ENCODE measurements at regions of chr7 and their contacts with region 1.

Region 1: DNA sequence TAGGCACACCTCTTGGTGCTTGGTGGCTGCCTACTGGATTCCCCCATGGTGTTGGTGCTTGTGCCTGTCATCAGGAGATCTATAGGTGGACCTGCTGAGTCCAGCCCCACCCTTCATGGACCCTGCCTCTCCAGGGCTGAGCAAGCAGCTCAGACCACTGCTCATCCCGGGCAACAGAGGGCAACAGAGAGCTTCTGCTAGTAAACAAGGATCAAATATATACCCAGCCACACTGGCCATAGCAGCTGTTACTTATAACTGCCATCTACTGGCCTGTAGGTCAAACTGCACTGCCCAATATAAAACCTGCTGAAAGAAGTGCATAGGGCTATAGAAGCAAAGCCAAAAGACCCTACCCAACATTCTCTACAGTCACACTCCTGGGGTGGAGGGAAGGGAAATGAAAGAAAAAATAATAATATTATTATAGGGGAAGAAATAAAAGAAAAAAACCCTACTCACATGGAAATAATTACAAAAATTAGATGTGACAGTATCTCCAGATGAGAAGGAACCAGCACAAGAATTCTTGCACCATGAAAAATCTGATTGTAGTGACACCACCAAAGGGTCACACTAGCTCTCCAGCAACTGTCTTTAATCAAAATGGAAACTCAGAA is 54.9 kb upstream of the ZNF800 start:
- DNase-seq: peak; percentile 13 to 76 (median 59)
- H3K4me3 ChIP-seq: no peak overlapping the region
- H3K4me3 Mint-ChIP-seq: no peak overlapping the region
- H3K27ac ChIP-seq: no peak overlapping the region
- H3K27ac Mint-ChIP-seq: peak overlapping the region in 3 of 8 donors; percentile 8 to 44 (median 36)
- H3K4me1 ChIP-seq: peaks cover 8% of the 10 kb centered on the region
- H3K4me1 Mint-ChIP-seq: peaks cover 10 to 22% (median 20%) of the 10 kb centered on the region in 3 donors
- H3K27me3 ChIP-seq: no peaks in the 10 kb centered on the region
- H3K27me3 Mint-ChIP-seq: peaks cover 18 to 46% of the 10 kb centered on the region in 2 donors

Region 2: GRCh38 chr7:127119517-127119916 is 327.9 kb before region 1 on chr7:
- CTCF ChIA-PET with region 1: no interaction called
- POLR2A ChIA-PET with region 1: no interaction called
- DNase-seq: no peak
- H3K4me3 ChIP-seq: no peak overlapping the region
- H3K4me3 Mint-ChIP-seq: no peak overlapping the region
- H3K27ac ChIP-seq: no peak overlapping the region
- H3K27ac Mint-ChIP-seq: no peak overlapping the region
- H3K4me1 ChIP-seq: no peaks in the 10 kb centered on the region
- H3K4me1 Mint-ChIP-seq: no peaks in the 10 kb centered on the region
- H3K27me3 ChIP-seq: no peaks in the 10 kb centered on the region
- H3K27me3 Mint-ChIP-seq: peaks cover 3 to 6% of the 10 kb centered on the region in 2 donors

Region 3: GRCh38 chr7:127347567-127348246 is 99.7 kb before region 1 on chr7:
- CTCF ChIA-PET with region 1: interaction called, 44 read pairs
- POLR2A ChIA-PET with region 1: interaction called, 5 read pairs
- DNase-seq: peak; percentile 59 to 74 (median 66)
- H3K4me3 ChIP-seq: no peak overlapping the region
- H3K4me3 Mint-ChIP-seq: peak overlapping the region; percentile 29 to 85 (median 64)
- H3K27ac ChIP-seq: no peak overlapping the region
- H3K27ac Mint-ChIP-seq: peak overlapping the region in 4 of 8 donors; percentile 8 to 72 (median 30)
- H3K4me1 ChIP-seq: no peaks in the 10 kb centered on the region
- H3K4me1 Mint-ChIP-seq: peaks cover 12 to 26% (median 24%) of the 10 kb centered on the region in 3 donors
- H3K27me3 ChIP-seq: no peaks in the 10 kb centered on the region
- H3K27me3 Mint-ChIP-seq: peaks cover 0 to 3% of the 10 kb centered on the region in 2 donors

Region 4: GRCh38 chr7:127353897-127354296 is 93.5 kb before region 1 on chr7:
- CTCF ChIA-PET with region 1: interaction called, 44 read pairs
- POLR2A ChIA-PET with region 1: no interaction called
- DNase-seq: no peak
- H3K4me3 ChIP-seq: no peak overlapping the region
- H3K4me3 Mint-ChIP-seq: no peak overlapping the region
- H3K27ac ChIP-seq: no peak overlapping the region
- H3K27ac Mint-ChIP-seq: peak overlapping the region in 1 of 8 donors; percentile 48
- H3K4me1 ChIP-seq: no peaks in the 10 kb centered on the region
- H3K4me1 Mint-ChIP-seq: peaks cover 18 to 38% (median 32%) of the 10 kb centered on the region in 3 donors
- H3K27me3 ChIP-seq: no peaks in the 10 kb centered on the region
- H3K27me3 Mint-ChIP-seq: no peaks in the 10 kb centered on the region

Region 5: GRCh38 chr7:127392566-127393367 is 54.7 kb before region 1 on chr7 and contains the start of gene ZNF800:
- CTCF ChIA-PET with region 1: interaction called, 32 read pairs
- POLR2A ChIA-PET with region 1: interaction called, 16 read pairs
- DNase-seq: peak; percentile 78 to 91 (median 87)
- H3K4me3 ChIP-seq: peak within 1 kb of the TSS; percentile 95
- H3K4me3 Mint-ChIP-seq: peak within 1 kb of the TSS; percentile 92 to 100 (median 98)
- H3K27ac ChIP-seq: peak within 1 kb of the TSS; percentile 99
- H3K27ac Mint-ChIP-seq: peak within 1 kb of the TSS; percentile 92 to 100 (median 99)
- H3K4me1 ChIP-seq: peaks cover 44% of the 10 kb centered on the region
- H3K4me1 Mint-ChIP-seq: peaks cover 51 to 59% (median 56%) of the 10 kb centered on the region in 3 donors
- H3K27me3 ChIP-seq: no peaks in the 10 kb centered on the region
- H3K27me3 Mint-ChIP-seq: peaks cover 0 to 8% of the 10 kb centered on the region in 2 donors
- total RNA-seq, gene ZNF800: 43.8 TPM

Region 6: GRCh38 chr7:127413962-127414361 is 33.5 kb before region 1 on chr7:
- CTCF ChIA-PET with region 1: interaction called, 13 read pairs
- POLR2A ChIA-PET with region 1: no interaction called
- DNase-seq: peak in 2 of 5 donors; percentile 54 to 70
- H3K4me3 ChIP-seq: peak overlapping the region; percentile 34
- H3K4me3 Mint-ChIP-seq: peak overlapping the region in 6 of 7 donors; percentile 53 to 82 (median 68)
- H3K27ac ChIP-seq: peak overlapping the region; percentile 17
- H3K27ac Mint-ChIP-seq: peak overlapping the region; percentile 64 to 97 (median 90)
- H3K4me1 ChIP-seq: peaks cover 36% of the 10 kb centered on the region
- H3K4me1 Mint-ChIP-seq: peaks cover 40 to 54% (median 50%) of the 10 kb centered on the region in 3 donors
- H3K27me3 ChIP-seq: no peaks in the 10 kb centered on the region
- H3K27me3 Mint-ChIP-seq: peaks cover 0 to 4% of the 10 kb centered on the region in 2 donors

Region 7: DNA sequence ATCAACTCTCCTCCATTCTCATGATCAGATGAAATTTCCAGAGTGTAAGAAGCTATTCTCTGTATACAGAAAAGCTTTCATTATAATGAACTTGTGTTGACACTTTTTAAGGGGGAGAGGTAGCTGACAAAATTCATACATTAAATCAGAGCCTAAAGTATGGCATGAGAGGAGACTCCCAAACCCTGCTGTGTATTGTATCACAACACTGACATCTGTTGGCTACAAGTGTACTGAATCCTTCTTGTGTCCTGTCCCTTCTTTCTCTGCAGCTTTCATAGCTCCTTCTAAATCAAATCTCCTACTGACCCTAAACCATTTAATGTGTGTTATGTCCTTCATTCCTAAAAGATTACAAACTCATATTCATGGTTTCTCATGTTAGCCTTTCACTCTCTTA is 67.1 kb after region 1 on chr7:
- CTCF ChIA-PET with region 1: interaction called, 10 read pairs
- POLR2A ChIA-PET with region 1: no interaction called
- DNase-seq: peak in 2 of 5 donors; percentile 15 to 38
- H3K4me3 ChIP-seq: no peak overlapping the region
- H3K4me3 Mint-ChIP-seq: no peak overlapping the region
- H3K27ac ChIP-seq: no peak overlapping the region
- H3K27ac Mint-ChIP-seq: no peak overlapping the region
- H3K4me1 ChIP-seq: no peaks in the 10 kb centered on the region
- H3K4me1 Mint-ChIP-seq: no peaks in the 10 kb centered on the region
- H3K27me3 ChIP-seq: no peaks in the 10 kb centered on the region
- H3K27me3 Mint-ChIP-seq: peaks cover 2 to 33% of the 10 kb centered on the region in 2 donors

Region 8: DNA sequence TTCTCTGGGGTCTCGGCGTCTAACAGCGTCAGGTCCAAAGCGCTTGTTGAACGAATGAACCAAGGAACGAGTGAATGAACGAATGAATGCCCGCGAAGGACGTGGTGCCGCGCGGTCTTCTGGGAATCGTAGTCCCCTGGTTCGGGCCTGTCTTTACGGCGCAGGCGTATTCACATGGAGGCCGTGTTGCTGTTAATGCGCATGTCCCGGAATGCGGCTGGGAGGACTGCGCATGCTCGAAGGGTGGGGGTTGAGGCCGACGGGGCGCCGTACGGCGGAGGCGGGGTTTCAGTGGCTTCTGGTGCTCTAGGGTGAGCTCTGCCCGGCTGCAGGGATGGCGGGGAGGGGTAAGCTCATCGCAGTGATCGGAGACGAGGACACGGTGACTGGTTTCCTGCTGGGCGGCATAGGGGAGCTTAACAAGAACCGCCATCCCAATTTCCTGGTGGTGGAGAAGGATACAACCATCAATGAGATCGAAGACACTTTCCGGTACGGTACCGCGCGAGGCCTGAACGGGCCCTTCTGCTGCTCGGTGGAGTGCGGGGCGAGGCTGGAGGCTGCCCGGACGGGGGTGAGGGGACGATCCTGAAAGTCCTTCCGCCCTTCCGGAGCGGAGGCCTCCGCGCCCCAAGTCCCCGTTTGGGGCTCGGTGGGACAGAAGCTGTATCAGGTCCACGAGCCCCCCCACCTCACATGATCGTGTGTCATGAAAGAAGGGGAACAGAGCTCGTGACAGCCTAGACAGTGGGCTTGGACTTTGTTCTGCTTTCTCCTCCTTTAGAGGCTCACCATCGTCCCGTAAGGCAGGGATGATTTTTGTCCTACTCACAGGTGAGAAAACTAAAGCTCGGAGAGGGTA is 1415.4 kb after region 1 on chr7 and contains the start of gene ATP6V1F:
- CTCF ChIA-PET with region 1: no interaction called
- POLR2A ChIA-PET with region 1: no interaction called
- DNase-seq: peak; percentile 98 to 99 (median 99)
- H3K4me3 ChIP-seq: peak within 1 kb of the TSS; percentile 98
- H3K4me3 Mint-ChIP-seq: peak within 1 kb of the TSS; percentile 93 to 100 (median 96)
- H3K27ac ChIP-seq: peak within 1 kb of the TSS; percentile 88
- H3K27ac Mint-ChIP-seq: peak within 1 kb of the TSS; percentile 84 to 100 (median 96)
- H3K4me1 ChIP-seq: peaks cover 14% of the 10 kb centered on the region
- H3K4me1 Mint-ChIP-seq: peaks cover 29 to 41% (median 40%) of the 10 kb centered on the region in 3 donors
- H3K27me3 ChIP-seq: no peaks in the 10 kb centered on the region
- H3K27me3 Mint-ChIP-seq: peaks cover 0 to 5% of the 10 kb centered on the region in 2 donors
- total RNA-seq, gene ATP6V1F: 145 to 147 TPM